CD8-positive, alpha-beta T cell (primary cell): ENCODE measurements at regions of chr3 and their contacts with region 1.

Region 1: DNA sequence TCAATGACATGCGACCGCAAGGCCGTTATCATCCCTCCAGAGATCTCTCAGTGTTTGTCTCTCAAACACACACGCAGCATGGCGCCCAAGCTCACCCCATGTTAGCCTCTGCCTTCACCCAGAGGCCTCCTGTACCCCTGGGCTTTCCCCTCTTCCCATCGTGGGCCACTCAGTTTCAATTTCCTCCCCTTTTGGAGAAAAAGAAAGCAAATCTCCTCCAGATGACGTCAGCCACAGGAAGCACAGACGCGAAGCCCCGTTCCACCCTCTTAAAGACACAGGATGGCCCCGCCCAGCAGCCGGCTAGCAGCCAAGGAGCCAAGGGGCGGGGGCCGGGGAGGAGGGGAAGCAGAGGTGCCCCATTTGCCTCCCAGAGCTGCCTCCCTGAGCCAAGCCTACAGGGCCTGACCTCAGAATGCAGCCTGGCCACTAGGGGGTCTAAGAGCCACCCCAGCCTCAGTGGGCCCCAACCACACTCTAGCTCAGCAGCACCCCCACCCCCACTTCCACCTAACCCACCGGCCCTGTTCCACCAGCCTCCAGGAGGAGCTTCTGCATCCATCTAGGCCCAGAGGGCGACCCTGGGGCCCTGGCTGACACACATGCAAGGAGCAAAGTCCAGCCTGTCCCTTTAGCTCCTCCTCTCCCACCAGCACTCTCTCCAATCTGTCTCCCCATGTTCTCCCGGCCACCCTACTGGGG is 26.5 kb downstream of the ATRIP start:
- DNase-seq: peak; percentile 85 to 99 (median 92)
- ATAC-seq: peak; percentile 87
- H3K4me3 ChIP-seq: peak overlapping the region; percentile 62 to 65
- H3K4me3 Mint-ChIP-seq: peak overlapping the region; percentile 90
- H3K27ac ChIP-seq: peak overlapping the region; percentile 82 to 92
- H3K27ac Mint-ChIP-seq: peak overlapping the region; percentile 99
- H3K4me1 ChIP-seq: peaks cover 55% of the 10 kb centered on the region
- H3K4me1 Mint-ChIP-seq: peaks cover 56% of the 10 kb centered on the region
- H3K27me3 ChIP-seq: no peaks in the 10 kb centered on the region
- H3K27me3 Mint-ChIP-seq: no peaks in the 10 kb centered on the region
- CTCF ChIP-seq: no peak

Region 2: GRCh38 chr3:48428088-48428829 is 44.8 kb before region 1 on chr3:
- CTCF ChIA-PET with region 1: no interaction called
- POLR2A ChIA-PET with region 1: no interaction called
- intact Hi-C with region 1: no loop called
- DNase-seq: no peak
- ATAC-seq: no peak
- H3K4me3 ChIP-seq: no peak overlapping the region
- H3K4me3 Mint-ChIP-seq: peak overlapping the region; percentile 68
- H3K27ac ChIP-seq: no peak overlapping the region
- H3K27ac Mint-ChIP-seq: no peak overlapping the region
- H3K4me1 ChIP-seq: peaks cover 6% of the 10 kb centered on the region
- H3K4me1 Mint-ChIP-seq: peaks cover 14% of the 10 kb centered on the region
- H3K27me3 ChIP-seq: no peaks in the 10 kb centered on the region
- H3K27me3 Mint-ChIP-seq: peaks cover 5% of the 10 kb centered on the region
- CTCF ChIP-seq: no peak

Region 3: GRCh38 chr3:48446425-48447193 is 26.5 kb before region 1 on chr3 and contains the start of gene ATRIP:
- CTCF ChIA-PET with region 1: interaction called, 3 read pairs
- POLR2A ChIA-PET with region 1: interaction called, 15 read pairs
- intact Hi-C with region 1: loop called (anchors 1 kb)
- DNase-seq: peak; percentile 70 to 91 (median 86)
- ATAC-seq: peak; percentile 98
- H3K4me3 ChIP-seq: peak within 1 kb of the TSS; percentile 68 to 81
- H3K4me3 Mint-ChIP-seq: peak within 1 kb of the TSS; percentile 85
- H3K27ac ChIP-seq: peak within 1 kb of the TSS; percentile 67 to 74
- H3K27ac Mint-ChIP-seq: peak within 1 kb of the TSS; percentile 92
- H3K4me1 ChIP-seq: peaks cover 24% of the 10 kb centered on the region
- H3K4me1 Mint-ChIP-seq: peaks cover 42% of the 10 kb centered on the region
- H3K27me3 ChIP-seq: no peaks in the 10 kb centered on the region
- H3K27me3 Mint-ChIP-seq: no peaks in the 10 kb centered on the region
- CTCF ChIP-seq: no peak
- total RNA-seq, gene ATRIP: 7.4 to 8.7 TPM

Region 4: GRCh38 chr3:48656061-48656840 is 183.2 kb after region 1 on chr3:
- CTCF ChIA-PET with region 1: no interaction called
- POLR2A ChIA-PET with region 1: no interaction called
- intact Hi-C with region 1: loop called in 1 of 2 experiments (anchors 10 kb)
- DNase-seq: peak; percentile 71 to 94 (median 83)
- ATAC-seq: peak; percentile 81
- H3K4me3 ChIP-seq: peak overlapping the region; percentile 53 to 83
- H3K4me3 Mint-ChIP-seq: peak overlapping the region; percentile 83
- H3K27ac ChIP-seq: peak overlapping the region; percentile 65 to 68
- H3K27ac Mint-ChIP-seq: peak overlapping the region; percentile 90
- H3K4me1 ChIP-seq: peaks cover 18% of the 10 kb centered on the region
- H3K4me1 Mint-ChIP-seq: peaks cover 18% of the 10 kb centered on the region
- H3K27me3 ChIP-seq: peaks cover 0 to 4% of the 10 kb centered on the region in 2 experiments
- H3K27me3 Mint-ChIP-seq: peaks cover 11% of the 10 kb centered on the region
- CTCF ChIP-seq: peak; percentile 60

Region 5: DNA sequence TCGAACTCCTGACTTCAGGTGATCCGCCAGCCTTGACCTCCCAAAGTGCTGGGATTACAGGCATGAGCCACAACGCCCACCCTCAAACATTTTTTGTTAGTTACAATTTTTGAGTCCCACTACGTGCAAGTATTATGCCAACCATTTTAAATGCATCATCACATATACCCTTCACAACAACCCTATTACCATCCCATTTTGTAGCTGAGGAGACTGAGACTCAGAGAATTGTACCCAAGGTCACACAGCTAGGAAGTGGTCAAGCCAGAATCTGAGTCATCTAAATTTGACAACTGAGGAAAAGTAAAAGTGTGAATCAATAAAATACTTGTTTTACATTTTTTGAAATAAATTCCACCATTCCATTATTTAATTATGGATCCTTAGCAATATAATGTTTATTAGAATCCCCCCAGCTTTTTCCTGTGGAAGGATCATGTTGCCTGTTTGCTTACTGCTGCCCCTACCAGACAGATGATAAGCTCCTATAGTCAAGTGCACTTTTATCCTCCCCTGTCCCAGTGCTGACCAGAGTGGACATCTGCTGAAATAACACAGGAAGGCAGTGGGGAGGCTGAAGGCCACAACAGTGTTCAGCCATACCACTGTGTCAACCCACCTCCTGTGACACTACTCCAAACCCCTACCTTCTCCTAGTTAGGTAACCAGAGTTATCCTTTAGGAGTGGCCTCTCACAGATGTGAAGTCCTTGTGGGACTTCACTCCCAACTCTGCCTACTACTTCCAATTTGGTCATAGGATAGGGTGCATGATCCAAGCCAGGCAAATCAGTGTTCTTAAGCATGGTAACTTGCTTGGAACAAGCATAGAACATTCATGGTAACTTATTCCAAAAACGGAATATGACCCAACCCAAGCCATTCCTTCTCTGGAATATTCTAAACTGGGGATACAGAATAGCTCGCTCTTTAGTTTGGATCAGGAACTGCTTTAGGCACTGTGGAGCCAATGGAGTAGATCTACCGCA is 346.5 kb after region 1 on chr3:
- CTCF ChIA-PET with region 1: no interaction called
- POLR2A ChIA-PET with region 1: no interaction called
- intact Hi-C with region 1: no loop called
- DNase-seq: no peak
- ATAC-seq: no peak
- H3K4me3 ChIP-seq: no peak overlapping the region
- H3K4me3 Mint-ChIP-seq: no peak overlapping the region
- H3K27ac ChIP-seq: no peak overlapping the region
- H3K27ac Mint-ChIP-seq: no peak overlapping the region
- H3K4me1 ChIP-seq: peaks cover 9% of the 10 kb centered on the region
- H3K4me1 Mint-ChIP-seq: peaks cover 49% of the 10 kb centered on the region
- H3K27me3 ChIP-seq: no peaks in the 10 kb centered on the region
- H3K27me3 Mint-ChIP-seq: no peaks in the 10 kb centered on the region
- CTCF ChIP-seq: no peak